ENCODE measurements at regions of chr3 and their contacts with region 1.

Region 1: GRCh38 chr3:16511681-16512434 is 1.6 kb downstream of the RFTN1 start:
- DNase-seq: peak; percentile 57 to 91
- H3K4me3 ChIP-seq: peak overlapping the region; percentile 81 to 95
- H3K27ac ChIP-seq: peak overlapping the region; percentile 85 to 87
- H3K4me1 ChIP-seq: peaks cover 0 to 35% of the 10 kb centered on the region in 2 donors
- H3K27me3 ChIP-seq: no peaks in the 10 kb centered on the region
- CTCF ChIP-seq: no peak

Region 2: DNA sequence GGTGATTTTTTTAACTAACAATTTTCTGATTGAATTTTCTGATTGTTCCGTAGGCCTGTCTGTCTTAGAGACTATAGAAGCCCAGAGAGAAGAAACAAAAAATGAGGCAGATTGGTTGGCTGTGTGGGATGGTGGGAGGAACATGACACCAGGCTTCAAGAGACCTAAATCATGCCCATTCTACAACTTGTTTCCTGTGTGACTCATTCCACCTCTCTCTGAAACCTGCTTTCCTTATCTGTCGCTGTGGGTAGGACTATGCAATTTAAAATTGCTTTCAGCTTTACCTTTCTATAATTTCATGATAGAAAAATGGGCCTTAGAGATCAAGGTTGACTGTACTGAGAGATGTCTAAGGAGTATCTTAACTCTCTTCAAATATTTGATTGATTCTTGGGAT is 202.3 kb before region 1 on chr3:
- intact Hi-C with region 1: no loop called
- DNase-seq: no peak
- H3K4me3 ChIP-seq: no peak overlapping the region
- H3K27ac ChIP-seq: no peak overlapping the region
- H3K4me1 ChIP-seq: no peaks in the 10 kb centered on the region
- H3K27me3 ChIP-seq: no peaks in the 10 kb centered on the region
- CTCF ChIP-seq: no peak

Region 3: GRCh38 chr3:16370872-16371740 is 140.8 kb before region 1 on chr3:
- intact Hi-C with region 1: loop called (anchors 2 kb)
- DNase-seq: peak in 1 of 2 donors; percentile 76
- H3K4me3 ChIP-seq: peak overlapping the region in 1 of 2 donors; percentile 2
- H3K27ac ChIP-seq: peak overlapping the region; percentile 75 to 83
- H3K4me1 ChIP-seq: peaks cover 6 to 45% of the 10 kb centered on the region in 2 donors
- H3K27me3 ChIP-seq: no peaks in the 10 kb centered on the region
- CTCF ChIP-seq: no peak

Region 4: DNA sequence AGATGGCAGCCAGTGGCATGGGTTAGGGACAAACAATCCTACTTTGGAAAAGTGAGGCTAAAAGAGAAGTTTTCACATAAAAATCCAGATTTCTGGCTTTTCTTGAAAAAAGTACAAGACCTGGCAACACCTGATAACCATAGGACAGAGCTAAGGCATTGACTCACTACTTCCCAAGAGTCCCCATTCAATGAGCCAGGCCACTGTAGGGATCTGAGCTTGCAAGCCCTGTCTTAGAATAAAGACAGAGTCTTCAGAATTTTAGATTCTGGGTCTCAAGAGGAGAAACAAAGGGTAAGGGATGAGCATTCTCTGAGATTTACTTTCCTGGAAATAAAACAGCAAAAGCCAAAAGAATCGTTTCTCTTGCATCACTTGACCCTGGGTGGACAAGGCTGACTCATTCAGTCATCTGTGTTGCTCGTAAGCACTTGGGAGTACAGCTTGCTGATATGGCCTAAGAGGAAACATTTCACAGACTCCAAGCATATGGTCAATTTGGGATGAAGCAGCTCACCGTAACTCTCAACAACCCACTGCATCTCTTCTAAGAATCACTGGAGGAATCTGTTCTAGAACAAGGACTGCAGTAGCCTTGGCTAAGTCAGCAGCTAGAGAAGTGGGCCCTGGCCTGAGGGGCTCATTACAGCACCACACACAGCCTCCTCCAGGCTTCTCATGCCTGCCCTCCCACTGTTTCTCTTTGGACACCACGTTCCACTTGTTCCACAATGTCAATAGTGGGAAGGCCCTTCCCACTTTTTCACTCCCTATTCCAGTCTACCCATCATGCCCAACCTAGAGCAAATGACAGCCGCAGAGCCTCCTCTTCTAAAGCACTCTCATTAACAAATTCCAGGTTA is 84.5 kb before region 1 on chr3:
- intact Hi-C with region 1: no loop called
- DNase-seq: peak in 1 of 2 donors; percentile 74
- H3K4me3 ChIP-seq: no peak overlapping the region
- H3K27ac ChIP-seq: peak overlapping the region; percentile 39 to 68
- H3K4me1 ChIP-seq: peaks cover 6 to 10% of the 10 kb centered on the region in 2 donors
- H3K27me3 ChIP-seq: no peaks in the 10 kb centered on the region
- CTCF ChIP-seq: no peak

Region 5: GRCh38 chr3:16448639-16449070 is 63.2 kb before region 1 on chr3:
- intact Hi-C with region 1: loop called (anchors 5 kb)
- DNase-seq: peak; percentile 43 to 95
- H3K4me3 ChIP-seq: peak overlapping the region in 1 of 2 donors; percentile 21
- H3K27ac ChIP-seq: peak overlapping the region; percentile 69 to 84
- H3K4me1 ChIP-seq: peaks cover 10 to 35% of the 10 kb centered on the region in 2 donors
- H3K27me3 ChIP-seq: no peaks in the 10 kb centered on the region
- CTCF ChIP-seq: no peak

Region 6: DNA sequence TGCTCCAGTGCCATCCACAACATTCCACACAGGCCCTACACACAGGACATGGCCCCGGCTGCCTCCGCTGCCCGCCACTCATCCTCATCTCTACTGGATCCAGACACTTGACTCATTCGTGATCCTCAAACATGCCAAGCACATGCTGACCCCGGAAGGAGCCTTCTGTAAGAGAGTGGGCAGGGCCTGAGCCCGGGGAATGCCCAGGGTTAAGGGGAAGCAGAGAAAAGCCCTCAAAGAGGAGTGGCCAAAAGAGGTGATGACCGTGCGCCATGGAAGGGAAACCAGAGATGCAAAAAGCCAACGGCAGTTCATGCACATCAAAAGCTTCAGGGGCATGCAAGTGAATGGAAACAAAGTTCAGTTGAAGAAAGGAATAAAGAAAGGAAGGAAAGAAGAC is 44.5 kb before region 1 on chr3:
- intact Hi-C with region 1: loop called (anchors 5 kb)
- DNase-seq: no peak
- H3K4me3 ChIP-seq: no peak overlapping the region
- H3K27ac ChIP-seq: peak overlapping the region; percentile 85 to 86
- H3K4me1 ChIP-seq: peaks cover 12 to 51% of the 10 kb centered on the region in 2 donors
- H3K27me3 ChIP-seq: no peaks in the 10 kb centered on the region
- CTCF ChIP-seq: no peak

Region 7: GRCh38 chr3:16550676-16551341 is 39.0 kb after region 1 on chr3:
- intact Hi-C with region 1: loop called (anchors 2 kb)
- DNase-seq: peak in 1 of 2 donors; percentile 89
- H3K4me3 ChIP-seq: peak overlapping the region in 1 of 2 donors; percentile 40
- H3K27ac ChIP-seq: no peak overlapping the region
- H3K4me1 ChIP-seq: no peaks in the 10 kb centered on the region
- H3K27me3 ChIP-seq: no peaks in the 10 kb centered on the region
- CTCF ChIP-seq: peak; percentile 84 to 88 (median 87)